Activated B cell treated with CpG ODN at 0.5 μM for 24 hours (primary cell): ENCODE measurements at regions of chr11 and their contacts with region 1.

Region 1: GRCh38 chr11:105081412-105082087 is 36.4 kb upstream of the CARD16 start:
- DNase-seq: no peak
- ATAC-seq: no peak
- H3K4me3 Mint-ChIP-seq: no peak overlapping the region
- H3K27ac Mint-ChIP-seq: no peak overlapping the region
- H3K4me1 Mint-ChIP-seq: peaks cover 9% of the 10 kb centered on the region
- H3K27me3 Mint-ChIP-seq: peaks cover 30% of the 10 kb centered on the region
- CTCF ChIP-seq: no peak

Region 2: DNA sequence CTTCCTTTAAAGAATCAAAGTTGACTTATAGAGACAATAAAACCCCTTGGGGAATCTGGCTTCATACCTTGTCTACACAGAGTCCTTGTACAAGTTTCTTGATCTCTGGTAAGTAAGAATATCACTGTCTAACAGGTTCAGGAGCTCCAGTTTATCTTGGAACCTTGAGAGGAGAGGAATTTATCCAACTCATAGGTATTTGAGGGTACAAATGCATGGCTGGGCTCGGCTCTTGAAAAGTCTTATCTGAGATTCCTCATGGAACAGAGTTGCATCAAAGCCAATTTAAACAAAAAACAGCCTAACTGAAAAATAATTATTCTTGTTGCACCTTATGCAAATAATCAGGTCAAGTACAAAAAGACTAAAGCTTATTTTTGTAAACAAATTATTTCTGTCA is 24.6 kb after region 1 on chr11:
- CTCF ChIA-PET with region 1: no interaction called
- POLR2A ChIA-PET with region 1: no interaction called
- intact Hi-C with region 1: loop called (anchors 1 kb)
- DNase-seq: no peak
- ATAC-seq: no peak
- H3K4me3 Mint-ChIP-seq: no peak overlapping the region
- H3K27ac Mint-ChIP-seq: no peak overlapping the region
- H3K4me1 Mint-ChIP-seq: peaks cover 14% of the 10 kb centered on the region
- H3K27me3 Mint-ChIP-seq: peaks cover 9% of the 10 kb centered on the region
- CTCF ChIP-seq: no peak